Activated B cell treated with CpG ODN at 0.5 μM for 24 hours (primary cell): ENCODE measurements at regions of chr7 and their contacts with region 1.

Region 1: GRCh38 chr7:157568770-157569584 is 232.2 kb downstream of the DNAJB6 start:
- DNase-seq: peak; percentile 25
- ATAC-seq: peak; percentile 78
- H3K4me3 Mint-ChIP-seq: peak overlapping the region; percentile 90
- H3K27ac Mint-ChIP-seq: peak overlapping the region; percentile 77
- H3K4me1 Mint-ChIP-seq: peaks cover 30% of the 10 kb centered on the region
- H3K27me3 Mint-ChIP-seq: peaks cover 3% of the 10 kb centered on the region
- CTCF ChIP-seq: no peak

Region 2: DNA sequence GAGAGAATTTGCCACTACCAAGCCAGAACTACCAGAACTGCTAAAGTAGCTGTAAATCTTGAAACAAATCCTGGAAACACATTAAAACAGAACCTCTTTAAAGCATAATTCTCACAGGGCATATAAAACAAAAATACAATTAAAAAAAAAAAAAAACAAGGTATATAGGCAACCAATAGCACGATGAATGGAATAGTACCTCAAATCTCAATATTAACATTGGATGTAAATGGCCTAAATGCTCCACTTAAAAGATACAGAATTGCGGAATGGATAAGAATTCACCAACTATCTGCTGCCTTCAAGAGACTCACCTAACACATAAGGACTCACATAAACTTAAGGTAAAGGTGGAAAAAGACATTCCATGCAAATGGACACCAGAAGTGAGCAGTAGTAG is 693.2 kb before region 1 on chr7:
- CTCF ChIA-PET with region 1: no interaction called
- POLR2A ChIA-PET with region 1: no interaction called
- intact Hi-C with region 1: no loop called
- DNase-seq: no peak
- ATAC-seq: no peak
- H3K4me3 Mint-ChIP-seq: no peak overlapping the region
- H3K27ac Mint-ChIP-seq: no peak overlapping the region
- H3K4me1 Mint-ChIP-seq: peaks cover 32% of the 10 kb centered on the region
- H3K27me3 Mint-ChIP-seq: no peaks in the 10 kb centered on the region
- CTCF ChIP-seq: no peak

Region 3: DNA sequence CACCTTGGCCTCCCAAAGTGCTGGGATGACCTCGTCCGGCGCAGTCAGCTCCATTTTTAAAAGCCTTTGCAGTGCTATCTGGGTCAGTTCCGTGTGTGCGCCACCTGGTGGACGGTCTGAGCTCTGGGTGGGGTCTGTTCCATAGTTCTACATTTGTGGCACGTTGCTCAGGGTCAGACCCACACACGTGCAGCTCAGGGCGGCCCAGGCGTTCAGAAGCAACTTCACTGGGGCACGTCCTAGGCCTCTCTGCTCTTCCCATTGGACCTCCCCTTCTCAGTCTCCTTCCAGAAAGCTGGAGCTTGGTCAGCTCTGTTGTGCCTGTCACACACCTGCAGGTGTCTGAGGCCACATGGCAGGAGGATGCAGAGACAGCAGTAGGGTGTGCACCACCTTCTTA is 94.3 kb before region 1 on chr7:
- CTCF ChIA-PET with region 1: no interaction called
- POLR2A ChIA-PET with region 1: no interaction called
- intact Hi-C with region 1: no loop called
- DNase-seq: no peak
- ATAC-seq: no peak
- H3K4me3 Mint-ChIP-seq: no peak overlapping the region
- H3K27ac Mint-ChIP-seq: no peak overlapping the region
- H3K4me1 Mint-ChIP-seq: no peaks in the 10 kb centered on the region
- H3K27me3 Mint-ChIP-seq: peaks cover 2% of the 10 kb centered on the region
- CTCF ChIP-seq: no peak

Region 4: DNA sequence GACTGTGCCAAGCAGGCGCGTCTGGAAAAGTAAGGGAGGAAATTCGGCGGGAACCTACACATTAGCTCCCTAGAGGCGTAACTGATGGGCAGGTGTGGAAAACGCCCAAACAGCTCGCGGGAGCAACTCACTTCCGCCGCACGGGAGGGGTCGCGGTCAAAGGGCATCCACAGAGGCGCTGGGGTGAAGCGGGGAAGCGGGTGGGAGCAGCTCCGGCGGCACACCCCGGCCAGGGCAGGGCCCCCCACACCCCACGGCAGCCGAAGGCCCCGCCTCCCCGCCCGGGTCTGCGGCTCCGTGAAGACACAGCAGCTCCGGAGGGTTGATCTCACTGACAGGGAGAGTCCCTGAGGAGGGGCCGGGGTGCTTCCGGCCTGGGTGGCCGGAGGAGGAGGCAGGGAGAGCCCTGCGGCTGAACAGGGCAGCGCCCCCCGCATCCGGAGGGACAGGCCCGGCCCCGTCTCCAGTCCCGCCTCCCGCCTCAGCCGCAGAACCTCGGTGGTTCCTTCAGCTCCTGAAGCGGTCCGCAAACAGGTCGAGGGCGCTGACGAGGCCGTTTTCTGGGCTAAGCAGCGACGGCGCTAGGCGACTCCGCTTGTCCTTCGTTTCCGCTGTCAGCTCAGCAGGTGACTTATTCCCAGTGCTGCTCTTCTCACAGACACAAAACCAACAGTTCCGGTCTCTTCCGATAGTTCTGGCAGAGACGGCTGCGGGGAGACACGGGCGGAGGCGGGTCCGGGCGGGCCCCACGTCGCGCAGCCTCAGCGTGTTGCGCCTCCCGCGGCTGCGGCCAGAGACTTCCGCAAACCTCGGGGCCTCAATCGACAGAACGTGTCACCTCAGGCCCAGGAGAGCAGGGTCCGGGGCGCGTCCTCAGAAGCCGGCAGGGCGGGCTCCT is 43.9 kb after region 1 on chr7:
- CTCF ChIA-PET with region 1: no interaction called
- POLR2A ChIA-PET with region 1: no interaction called
- intact Hi-C with region 1: loop called (anchors 1 kb)
- DNase-seq: peak; percentile 47
- ATAC-seq: peak; percentile 79
- H3K4me3 Mint-ChIP-seq: peak overlapping the region; percentile 82
- H3K27ac Mint-ChIP-seq: peak overlapping the region; percentile 50
- H3K4me1 Mint-ChIP-seq: peaks cover 5% of the 10 kb centered on the region
- H3K27me3 Mint-ChIP-seq: no peaks in the 10 kb centered on the region
- CTCF ChIP-seq: no peak